RWPE1 (cell line): ENCODE measurements at regions of chr1 and their contacts with region 1.

Region 1: GRCh38 chr1:221497046-221497445 is 244.8 kb downstream of the DUSP10 start:
- DNase-seq: no peak
- H3K27ac ChIP-seq: no peak overlapping the region
- CTCF ChIP-seq: no peak

Region 2: GRCh38 chr1:221514806-221515205 is 17.8 kb after region 1 on chr1:
- CTCF ChIA-PET with region 1: interaction called, 10 read pairs
- POLR2A ChIA-PET with region 1: no interaction called
- DNase-seq: no peak
- H3K27ac ChIP-seq: no peak overlapping the region
- CTCF ChIP-seq: no peak